HepG2 (cell line): ENCODE measurements at regions of chr20 and their contacts with region 1.

Region 1: DNA sequence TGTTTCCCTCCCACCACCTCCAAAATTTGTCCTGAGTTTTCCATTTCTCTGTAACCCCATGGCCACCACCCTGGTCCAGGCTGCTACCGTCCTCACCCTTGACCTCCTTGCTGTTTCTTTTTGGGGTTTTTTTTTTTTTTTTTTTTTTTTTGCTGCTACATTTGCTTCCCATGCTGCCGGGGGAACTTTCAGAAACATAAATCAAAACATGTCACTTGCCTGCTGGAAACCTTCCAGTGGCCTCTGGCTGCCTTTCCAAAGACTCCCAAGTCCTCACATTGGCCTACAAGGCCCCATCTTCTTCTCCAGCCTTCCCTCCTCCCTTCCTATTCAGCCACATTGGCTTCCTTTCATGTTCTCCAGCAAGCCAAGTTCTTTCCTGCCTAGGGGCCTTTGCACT is 50.4 kb upstream of the PTGIS start:
- DNase-seq: no peak
- ATAC-seq: no peak
- H3K4me3 ChIP-seq: no peak overlapping the region
- H3K27ac ChIP-seq: no peak overlapping the region
- H3K4me1 ChIP-seq: peaks cover 45% of the 10 kb centered on the region
- H3K27me3 ChIP-seq: peaks cover 0 to 6% of the 10 kb centered on the region in 2 experiments; a peak in 1 of 5 replicates
- CTCF ChIP-seq: no peak
- EP300 ChIP-seq: no peak
- POLR2A ChIP-seq: no peak
- RAD21 ChIP-seq: no peak

Region 2: DNA sequence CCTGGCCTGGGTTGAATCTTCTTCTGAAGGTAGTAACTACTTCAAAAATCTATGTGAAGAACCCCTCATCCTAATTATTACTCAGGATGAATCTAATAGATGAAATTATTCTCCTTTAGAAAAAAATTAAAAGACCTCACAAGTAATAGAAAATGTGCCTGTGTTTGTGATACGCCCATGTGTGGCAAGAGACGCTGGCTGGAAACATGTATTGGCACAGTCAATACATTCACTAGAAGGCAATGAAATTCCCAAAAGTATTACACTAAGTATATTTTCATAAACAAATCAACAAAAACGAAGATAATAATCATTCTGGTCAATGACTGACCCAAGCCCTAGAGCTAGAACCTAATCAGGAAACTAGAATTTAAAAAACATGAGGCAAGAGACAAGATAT is 31.4 kb after region 1 on chr20:
- CTCF ChIA-PET with region 1: no interaction called
- POLR2A ChIA-PET with region 1: no interaction called
- in situ Hi-C with region 1: no loop called
- intact Hi-C with region 1: no loop called
- DNase-seq: no peak
- ATAC-seq: no peak
- H3K4me3 ChIP-seq: no peak overlapping the region
- H3K27ac ChIP-seq: no peak overlapping the region
- H3K4me1 ChIP-seq: peaks cover 17% of the 10 kb centered on the region
- H3K27me3 ChIP-seq: no peaks in the 10 kb centered on the region
- CTCF ChIP-seq: no peak
- EP300 ChIP-seq: no peak
- POLR2A ChIP-seq: no peak
- RAD21 ChIP-seq: no peak

Region 3: GRCh38 chr20:49661560-49662329 is 43.5 kb after region 1 on chr20:
- CTCF ChIA-PET with region 1: no interaction called
- POLR2A ChIA-PET with region 1: no interaction called
- in situ Hi-C with region 1: no loop called
- intact Hi-C with region 1: loop called (anchors 2 kb)
- DNase-seq: peak; percentile 82
- ATAC-seq: peak; percentile 89
- H3K4me3 ChIP-seq: peak overlapping the region in 1 of 3 experiments; percentile 1; a peak in 1 of 6 replicates
- H3K27ac ChIP-seq: peak overlapping the region; percentile 54
- H3K4me1 ChIP-seq: peaks cover 65% of the 10 kb centered on the region
- H3K27me3 ChIP-seq: no peaks in the 10 kb centered on the region
- CTCF ChIP-seq: peak; percentile 8; the same call in 1 of the 2 replicates
- EP300 ChIP-seq: no peak
- POLR2A ChIP-seq: no peak
- RAD21 ChIP-seq: no peak